CD8-positive, alpha-beta T cell (primary cell): ENCODE measurements at regions of chr18 and their contacts with region 1.

Region 1: DNA sequence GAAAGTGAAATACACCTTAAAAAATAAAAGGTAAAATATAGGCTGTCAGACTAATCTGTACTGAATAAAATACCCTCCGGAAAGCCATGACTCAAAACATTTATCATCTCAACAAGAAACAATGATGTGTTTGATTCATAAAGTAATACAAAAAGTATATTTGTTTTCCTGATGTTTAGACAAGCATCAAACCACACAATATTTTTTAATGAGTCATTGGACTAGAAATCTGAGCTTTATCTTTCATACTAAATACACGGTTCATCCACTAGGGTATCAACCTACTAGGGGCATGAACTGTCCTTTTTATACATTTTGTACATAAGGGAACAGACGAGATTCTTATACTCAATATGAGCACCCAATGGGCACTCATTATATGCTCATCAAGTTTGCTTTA is 31.3 kb downstream of the CD226 start:
- DNase-seq: no peak
- ATAC-seq: no peak
- H3K4me3 ChIP-seq: no peak overlapping the region
- H3K4me3 Mint-ChIP-seq: no peak overlapping the region
- H3K27ac ChIP-seq: no peak overlapping the region
- H3K27ac Mint-ChIP-seq: no peak overlapping the region
- H3K4me1 ChIP-seq: no peaks in the 10 kb centered on the region
- H3K4me1 Mint-ChIP-seq: peaks cover 52% of the 10 kb centered on the region
- H3K27me3 ChIP-seq: no peaks in the 10 kb centered on the region
- H3K27me3 Mint-ChIP-seq: no peaks in the 10 kb centered on the region
- CTCF ChIP-seq: no peak

Region 2: DNA sequence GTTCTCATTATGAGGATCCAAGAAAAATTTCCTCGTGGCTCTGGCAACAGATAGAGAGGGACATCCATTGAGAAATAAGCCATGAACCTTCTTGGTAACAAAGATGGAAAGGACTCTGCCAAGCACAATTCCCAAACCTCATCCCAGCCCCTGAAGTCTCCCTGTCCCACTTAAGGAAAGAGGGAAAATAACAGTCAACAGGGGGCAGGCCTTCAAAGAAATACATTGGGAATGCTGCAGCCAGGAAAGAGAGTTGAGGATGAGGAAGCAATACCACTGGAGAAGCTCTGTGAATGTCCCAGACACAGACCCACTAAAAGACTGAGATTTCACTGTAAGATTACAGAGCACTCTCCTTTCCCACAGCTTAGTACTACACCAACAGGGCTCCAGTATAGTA is 62.0 kb before region 1 on chr18:
- CTCF ChIA-PET with region 1: no interaction called
- POLR2A ChIA-PET with region 1: no interaction called
- intact Hi-C with region 1: no loop called
- DNase-seq: no peak
- ATAC-seq: no peak
- H3K4me3 ChIP-seq: no peak overlapping the region
- H3K4me3 Mint-ChIP-seq: no peak overlapping the region
- H3K27ac ChIP-seq: no peak overlapping the region
- H3K27ac Mint-ChIP-seq: no peak overlapping the region
- H3K4me1 ChIP-seq: no peaks in the 10 kb centered on the region
- H3K4me1 Mint-ChIP-seq: no peaks in the 10 kb centered on the region
- H3K27me3 ChIP-seq: no peaks in the 10 kb centered on the region
- H3K27me3 Mint-ChIP-seq: no peaks in the 10 kb centered on the region
- CTCF ChIP-seq: no peak

Region 3: GRCh38 chr18:69929041-69929774 is 12.8 kb after region 1 on chr18:
- CTCF ChIA-PET with region 1: no interaction called
- POLR2A ChIA-PET with region 1: no interaction called
- intact Hi-C with region 1: loop called in 1 of 2 experiments (anchors 2 kb)
- DNase-seq: no peak
- ATAC-seq: no peak
- H3K4me3 ChIP-seq: no peak overlapping the region
- H3K4me3 Mint-ChIP-seq: no peak overlapping the region
- H3K27ac ChIP-seq: no peak overlapping the region
- H3K27ac Mint-ChIP-seq: no peak overlapping the region
- H3K4me1 ChIP-seq: peaks cover 19% of the 10 kb centered on the region
- H3K4me1 Mint-ChIP-seq: peaks cover 34% of the 10 kb centered on the region
- H3K27me3 ChIP-seq: no peaks in the 10 kb centered on the region
- H3K27me3 Mint-ChIP-seq: no peaks in the 10 kb centered on the region
- CTCF ChIP-seq: no peak

Region 4: DNA sequence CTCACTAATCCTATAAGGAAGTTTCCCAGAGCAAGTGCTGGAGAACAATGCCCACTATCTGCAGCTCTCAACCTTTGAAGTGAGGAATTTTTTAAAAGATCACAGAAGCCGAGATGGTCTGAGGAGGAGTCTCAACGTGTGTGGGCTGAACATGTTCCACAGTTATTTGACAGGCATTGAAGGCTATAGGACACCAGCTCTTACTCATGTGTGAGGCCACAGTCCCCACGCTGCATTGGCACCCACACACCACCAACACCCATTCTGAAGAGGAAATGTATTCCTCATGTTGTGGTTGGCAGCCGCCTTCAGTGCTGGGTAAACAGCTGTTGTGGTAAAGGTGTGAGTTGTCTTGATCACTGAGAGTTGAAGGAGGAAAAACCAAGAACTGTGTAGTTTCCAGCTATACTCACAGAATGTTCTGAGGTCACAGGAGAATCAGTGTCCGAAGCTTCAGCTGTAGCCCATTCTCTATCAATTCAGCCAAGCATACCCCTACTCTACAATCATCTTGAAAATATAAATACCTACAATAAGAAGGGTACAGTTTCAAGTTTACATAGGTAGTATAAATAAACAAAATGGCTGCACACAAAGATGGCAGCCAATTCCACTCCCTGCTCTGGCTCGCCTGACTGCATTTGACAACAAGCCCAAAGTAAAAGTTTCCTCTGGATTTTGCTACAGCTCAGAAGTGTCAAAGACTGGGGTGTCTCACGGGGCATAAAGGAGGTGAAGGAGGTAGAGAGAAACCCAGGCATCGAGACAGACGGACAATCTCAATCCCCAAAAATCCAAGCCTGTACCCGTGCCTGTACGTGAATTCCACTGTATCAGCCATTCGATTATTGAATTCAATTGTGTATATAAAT is 19.1 kb after region 1 on chr18:
- CTCF ChIA-PET with region 1: interaction called, 4 read pairs
- POLR2A ChIA-PET with region 1: interaction called, 5 read pairs
- intact Hi-C with region 1: loop called in 1 of 2 experiments (anchors 2 kb)
- DNase-seq: peak; percentile 64 to 95 (median 80)
- ATAC-seq: peak; percentile 96
- H3K4me3 ChIP-seq: peak overlapping the region; percentile 1 to 18
- H3K4me3 Mint-ChIP-seq: no peak overlapping the region
- H3K27ac ChIP-seq: peak overlapping the region; percentile 25 to 63
- H3K27ac Mint-ChIP-seq: no peak overlapping the region
- H3K4me1 ChIP-seq: peaks cover 75% of the 10 kb centered on the region
- H3K4me1 Mint-ChIP-seq: peaks cover 38% of the 10 kb centered on the region
- H3K27me3 ChIP-seq: no peaks in the 10 kb centered on the region
- H3K27me3 Mint-ChIP-seq: no peaks in the 10 kb centered on the region
- CTCF ChIP-seq: no peak

Region 5: GRCh38 chr18:71808616-71809015 is 1892.2 kb after region 1 on chr18:
- CTCF ChIA-PET with region 1: no interaction called
- POLR2A ChIA-PET with region 1: no interaction called
- intact Hi-C with region 1: no loop called
- DNase-seq: no peak
- ATAC-seq: no peak
- H3K4me3 ChIP-seq: no peak overlapping the region
- H3K4me3 Mint-ChIP-seq: no peak overlapping the region
- H3K27ac ChIP-seq: no peak overlapping the region
- H3K27ac Mint-ChIP-seq: no peak overlapping the region
- H3K4me1 ChIP-seq: no peaks in the 10 kb centered on the region
- H3K4me1 Mint-ChIP-seq: no peaks in the 10 kb centered on the region
- H3K27me3 ChIP-seq: no peaks in the 10 kb centered on the region
- H3K27me3 Mint-ChIP-seq: no peaks in the 10 kb centered on the region
- CTCF ChIP-seq: no peak